CD8-positive, alpha-beta T cell (primary cell): ENCODE measurements at regions of chr19 and their contacts with region 1.

Region 1: GRCh38 chr19:6767357-6768235 is at the start of gene SH2D3A:
- DNase-seq: peak; percentile 88 to 99 (median 96)
- ATAC-seq: peak; percentile 74
- H3K4me3 ChIP-seq: peak within 1 kb of the TSS; percentile 57 to 58
- H3K4me3 Mint-ChIP-seq: peak within 1 kb of the TSS; percentile 87
- H3K27ac ChIP-seq: peak within 1 kb of the TSS; percentile 84 to 97
- H3K27ac Mint-ChIP-seq: peak within 1 kb of the TSS; percentile 97
- H3K4me1 ChIP-seq: peaks cover 43% of the 10 kb centered on the region
- H3K4me1 Mint-ChIP-seq: peaks cover 50% of the 10 kb centered on the region
- H3K27me3 ChIP-seq: no peaks in the 10 kb centered on the region
- H3K27me3 Mint-ChIP-seq: no peaks in the 10 kb centered on the region
- CTCF ChIP-seq: no peak
- total RNA-seq, gene SH2D3A: 33.5 to 38.8 TPM

Region 2: GRCh38 chr19:6460101-6460853 is 307.3 kb before region 1 on chr19:
- CTCF ChIA-PET with region 1: no interaction called
- POLR2A ChIA-PET with region 1: no interaction called
- intact Hi-C with region 1: loop called (anchors 1 kb)
- DNase-seq: peak; percentile 93 to 98 (median 96)
- ATAC-seq: peak; percentile 85
- H3K4me3 ChIP-seq: peak overlapping the region; percentile 73 to 87
- H3K4me3 Mint-ChIP-seq: peak overlapping the region; percentile 94
- H3K27ac ChIP-seq: peak overlapping the region; percentile 62 to 69
- H3K27ac Mint-ChIP-seq: peak overlapping the region; percentile 81
- H3K4me1 ChIP-seq: peaks cover 20% of the 10 kb centered on the region
- H3K4me1 Mint-ChIP-seq: peaks cover 32% of the 10 kb centered on the region
- H3K27me3 ChIP-seq: peaks cover 0 to 3% of the 10 kb centered on the region in 2 experiments
- H3K27me3 Mint-ChIP-seq: no peaks in the 10 kb centered on the region
- CTCF ChIP-seq: peak; percentile 54

Region 3: GRCh38 chr19:6718741-6719539 is 48.7 kb before region 1 on chr19:
- CTCF ChIA-PET with region 1: no interaction called
- POLR2A ChIA-PET with region 1: no interaction called
- intact Hi-C with region 1: loop called in 1 of 2 experiments (anchors 1 kb)
- DNase-seq: peak in 3 of 9 experiments; percentile 46 to 62 (median 62)
- ATAC-seq: peak; percentile 83
- H3K4me3 ChIP-seq: no peak overlapping the region
- H3K4me3 Mint-ChIP-seq: no peak overlapping the region
- H3K27ac ChIP-seq: no peak overlapping the region
- H3K27ac Mint-ChIP-seq: no peak overlapping the region
- H3K4me1 ChIP-seq: no peaks in the 10 kb centered on the region
- H3K4me1 Mint-ChIP-seq: peaks cover 12% of the 10 kb centered on the region
- H3K27me3 ChIP-seq: no peaks in the 10 kb centered on the region
- H3K27me3 Mint-ChIP-seq: no peaks in the 10 kb centered on the region
- CTCF ChIP-seq: no peak

Region 4: DNA sequence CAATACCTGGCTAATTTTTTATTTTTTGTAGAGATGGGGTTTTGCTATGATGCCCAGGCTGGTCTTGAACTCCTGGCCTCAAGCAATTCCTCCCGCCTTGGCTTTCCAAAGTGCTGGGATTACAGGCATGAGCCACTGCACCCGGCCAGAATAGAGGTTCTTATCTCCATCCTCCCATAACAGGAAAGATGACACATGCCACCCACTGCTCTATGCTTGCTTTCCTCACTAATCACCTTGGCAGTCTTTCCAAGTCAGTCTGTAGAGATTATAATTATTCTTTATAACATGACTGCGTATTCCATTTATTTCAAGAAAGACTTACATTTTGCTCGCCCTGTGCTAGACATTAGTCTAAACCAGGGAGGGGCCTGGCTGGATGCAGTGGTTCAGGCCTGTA is 11.6 kb after region 1 on chr19:
- CTCF ChIA-PET with region 1: interaction called, 6 read pairs
- POLR2A ChIA-PET with region 1: interaction called, 13 read pairs
- intact Hi-C with region 1: no loop called
- DNase-seq: no peak
- ATAC-seq: no peak
- H3K4me3 ChIP-seq: no peak overlapping the region
- H3K4me3 Mint-ChIP-seq: no peak overlapping the region
- H3K27ac ChIP-seq: peak overlapping the region in 1 of 2 experiments; percentile 57
- H3K27ac Mint-ChIP-seq: no peak overlapping the region
- H3K4me1 ChIP-seq: peaks cover 42% of the 10 kb centered on the region
- H3K4me1 Mint-ChIP-seq: peaks cover 60% of the 10 kb centered on the region
- H3K27me3 ChIP-seq: no peaks in the 10 kb centered on the region
- H3K27me3 Mint-ChIP-seq: no peaks in the 10 kb centered on the region
- CTCF ChIP-seq: no peak

Region 5: GRCh38 chr19:6801485-6802086 is 34.0 kb after region 1 on chr19:
- CTCF ChIA-PET with region 1: interaction called, 4 read pairs
- POLR2A ChIA-PET with region 1: interaction called, 36 read pairs
- intact Hi-C with region 1: loop called (anchors 1 kb)
- DNase-seq: peak; percentile 54 to 96 (median 87)
- ATAC-seq: peak; percentile 78
- H3K4me3 ChIP-seq: peak overlapping the region; percentile 71 to 79
- H3K4me3 Mint-ChIP-seq: peak overlapping the region; percentile 87
- H3K27ac ChIP-seq: peak overlapping the region; percentile 74 to 91
- H3K27ac Mint-ChIP-seq: peak overlapping the region; percentile 95
- H3K4me1 ChIP-seq: peaks cover 48% of the 10 kb centered on the region
- H3K4me1 Mint-ChIP-seq: peaks cover 68% of the 10 kb centered on the region
- H3K27me3 ChIP-seq: no peaks in the 10 kb centered on the region
- H3K27me3 Mint-ChIP-seq: no peaks in the 10 kb centered on the region
- CTCF ChIP-seq: no peak

Region 6: DNA sequence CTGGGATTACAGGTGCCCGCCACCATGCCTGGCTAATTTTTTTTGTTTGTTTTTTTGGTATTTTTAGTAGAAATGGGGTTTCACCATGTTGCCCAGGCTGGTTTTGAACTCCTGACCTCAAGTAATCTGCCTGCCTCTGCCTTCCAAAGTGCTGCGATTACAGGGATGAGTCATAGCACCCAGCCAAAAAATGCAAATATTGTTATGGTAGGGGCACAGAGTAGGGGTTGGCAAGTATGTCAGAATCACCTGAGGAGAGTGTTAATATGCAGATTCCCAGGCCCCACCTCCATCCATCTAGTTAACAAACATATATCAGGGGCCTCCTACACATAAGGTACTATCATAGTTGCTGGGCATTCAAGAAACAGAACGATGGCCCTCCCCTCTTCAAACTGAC is 49.6 kb after region 1 on chr19:
- CTCF ChIA-PET with region 1: no interaction called
- POLR2A ChIA-PET with region 1: no interaction called
- intact Hi-C with region 1: no loop called
- DNase-seq: no peak
- ATAC-seq: no peak
- H3K4me3 ChIP-seq: no peak overlapping the region
- H3K4me3 Mint-ChIP-seq: no peak overlapping the region
- H3K27ac ChIP-seq: no peak overlapping the region
- H3K27ac Mint-ChIP-seq: peak overlapping the region; percentile 70
- H3K4me1 ChIP-seq: peaks cover 26% of the 10 kb centered on the region
- H3K4me1 Mint-ChIP-seq: peaks cover 49% of the 10 kb centered on the region
- H3K27me3 ChIP-seq: no peaks in the 10 kb centered on the region
- H3K27me3 Mint-ChIP-seq: no peaks in the 10 kb centered on the region
- CTCF ChIP-seq: no peak

Region 7: GRCh38 chr19:7069042-7069903 is 301.7 kb after region 1 on chr19 and contains the start of gene ZNF557:
- CTCF ChIA-PET with region 1: no interaction called
- POLR2A ChIA-PET with region 1: no interaction called
- intact Hi-C with region 1: loop called in 1 of 2 experiments (anchors 10 kb)
- DNase-seq: peak; percentile 98 to 99 (median 99)
- ATAC-seq: peak; percentile 97
- H3K4me3 ChIP-seq: peak within 1 kb of the TSS; percentile 76 to 99
- H3K4me3 Mint-ChIP-seq: peak within 1 kb of the TSS; percentile 94
- H3K27ac ChIP-seq: peak within 1 kb of the TSS; percentile 81 to 95
- H3K27ac Mint-ChIP-seq: peak within 1 kb of the TSS; percentile 96
- H3K4me1 ChIP-seq: peaks cover 21% of the 10 kb centered on the region
- H3K4me1 Mint-ChIP-seq: peaks cover 25% of the 10 kb centered on the region
- H3K27me3 ChIP-seq: no peaks in the 10 kb centered on the region
- H3K27me3 Mint-ChIP-seq: no peaks in the 10 kb centered on the region
- CTCF ChIP-seq: no peak
- total RNA-seq, gene ZNF557: 19.7 to 20.0 TPM